Vagina (tissue), 2 donors: ENCODE measurements at regions of chr14 and their contacts with region 1.

Region 1: GRCh38 chr14:64806202-64806860 is 73.4 kb downstream of the SPTB start:
- DNase-seq: no peak
- H3K4me3 ChIP-seq: no peak overlapping the region
- H3K27ac ChIP-seq: no peak overlapping the region
- H3K4me1 ChIP-seq: no peaks in the 10 kb centered on the region
- H3K27me3 ChIP-seq: no peaks in the 10 kb centered on the region
- CTCF ChIP-seq: no peak
- POLR2A ChIP-seq: no peak

Region 2: GRCh38 chr14:66758031-66758613 is 1951.8 kb after region 1 on chr14:
- intact Hi-C with region 1: loop called (anchors 5 kb)
- DNase-seq: no peak
- H3K4me3 ChIP-seq: no peak overlapping the region
- H3K27ac ChIP-seq: no peak overlapping the region
- H3K4me1 ChIP-seq: no peaks in the 10 kb centered on the region
- H3K27me3 ChIP-seq: no peaks in the 10 kb centered on the region
- CTCF ChIP-seq: no peak
- POLR2A ChIP-seq: no peak